ENCODE measurements at regions of chr9 and their contacts with region 1.

Region 1: DNA sequence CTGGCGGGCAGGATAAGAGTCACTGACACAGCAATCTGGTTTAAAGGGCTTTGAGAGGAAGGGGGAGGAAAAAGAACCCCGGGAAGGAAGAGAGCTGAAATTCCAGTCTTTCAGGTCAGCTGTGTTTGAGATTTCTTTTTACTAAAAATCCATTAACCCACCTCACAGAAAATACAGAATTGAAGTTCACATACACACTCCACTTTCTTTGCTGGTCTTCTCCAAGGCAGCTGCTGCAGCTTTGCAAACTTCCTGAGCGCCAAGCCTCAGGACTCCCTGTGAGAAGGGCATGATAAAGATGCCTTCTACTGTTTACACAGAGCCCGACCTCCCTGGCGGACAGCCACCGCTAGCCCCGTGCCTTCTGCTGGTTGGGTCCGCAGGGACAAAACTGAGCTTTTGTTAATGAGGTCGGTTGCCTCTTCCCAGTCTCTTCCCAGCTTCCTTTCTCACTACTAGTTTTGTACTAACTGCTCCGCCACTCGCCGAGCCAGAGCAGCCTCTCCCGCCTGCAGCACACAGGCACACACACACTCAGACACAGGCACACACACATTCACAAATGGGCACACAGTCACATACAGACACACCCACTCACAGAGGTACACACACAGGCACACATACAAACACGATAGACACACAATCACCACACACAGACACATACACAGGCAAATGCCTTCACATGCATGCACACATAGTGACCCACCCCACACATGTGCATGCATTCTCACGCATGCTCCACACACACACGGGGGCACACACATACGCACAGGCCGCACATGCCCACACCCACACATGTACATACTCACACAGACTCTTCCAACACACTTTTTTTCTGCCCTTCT is at the start of gene FREM1:
- DNase-seq: peak; percentile 44
- ATAC-seq: peak; percentile 66 to 74
- total RNA-seq, gene FREM1: 1.8 to 7.7 TPM

Region 2: GRCh38 chr9:14924899-14925235 is 14.7 kb after region 1 on chr9:
- intact Hi-C with region 1: loop called in 1 of 2 experiments (anchors 2 kb)
- DNase-seq: no peak
- ATAC-seq: peak; percentile 65 to 79

Region 3: GRCh38 chr9:14958989-14959388 is 48.8 kb after region 1 on chr9:
- intact Hi-C with region 1: loop called in 1 of 2 experiments (anchors 10 kb)
- DNase-seq: no peak
- ATAC-seq: no peak